SK-N-SH (cell line): ENCODE measurements at regions of chr17 and their contacts with region 1.

Region 1: GRCh38 chr17:8785547-8786413 is 13.4 kb downstream of the MFSD6L start:
- DNase-seq: peak; percentile 80
- H3K4me3 ChIP-seq: peak overlapping the region in 1 of 2 experiments; percentile 16; a peak in 1 of 4 replicates
- H3K27ac ChIP-seq: no peak overlapping the region
- H3K4me1 ChIP-seq: peaks cover 0 to 2% of the 10 kb centered on the region in 2 experiments; a peak in 1 of 4 replicates
- H3K27me3 ChIP-seq: peaks cover 17% of the 10 kb centered on the region; the same call in 1 of the 2 replicates
- CTCF ChIP-seq: peak; percentile 84
- EP300 ChIP-seq: no peak
- RAD21 ChIP-seq: peak; percentile 90

Region 2: DNA sequence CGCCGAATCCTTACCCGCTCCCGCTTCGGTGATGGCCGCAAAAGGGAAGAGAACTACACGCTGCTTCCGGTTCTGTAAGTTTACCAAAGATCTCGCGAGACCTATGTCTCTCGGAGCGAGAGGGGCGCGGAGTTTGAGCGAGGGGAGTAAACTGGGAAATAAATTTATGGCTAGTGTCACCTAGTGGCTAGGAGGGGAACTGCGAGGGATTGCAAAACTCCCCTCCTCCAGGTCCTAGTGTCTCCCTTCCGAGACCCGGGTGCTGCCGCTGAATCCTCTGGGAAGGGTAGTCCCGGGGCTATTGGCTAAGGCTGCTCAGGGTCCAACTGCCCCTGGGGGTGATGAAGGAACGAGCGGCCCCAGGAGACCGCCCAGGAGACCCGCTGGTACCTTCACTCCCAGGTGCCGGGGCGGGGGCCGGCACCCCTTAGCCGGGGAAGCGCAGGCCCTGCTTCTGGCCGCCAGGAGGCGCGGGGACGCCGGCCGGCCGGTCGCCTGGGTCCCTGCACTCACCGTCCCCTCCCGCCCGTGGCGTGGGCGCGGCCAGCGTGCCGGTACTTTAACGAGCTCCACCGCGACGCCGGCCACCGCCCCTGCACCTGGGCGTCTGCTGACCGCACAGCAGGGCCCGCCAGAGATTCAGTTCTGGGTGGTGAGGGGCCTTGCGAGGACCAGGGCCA is 402.5 kb before region 1 on chr17 and contains the start of gene RPL26:
- CTCF ChIA-PET with region 1: interaction called, 17 read pairs
- POLR2A ChIA-PET with region 1: interaction called, 6 read pairs
- DNase-seq: peak; percentile 94
- H3K4me3 ChIP-seq: peak within 1 kb of the TSS; percentile 73 to 87
- H3K27ac ChIP-seq: peak within 1 kb of the TSS; percentile 77 to 90
- H3K4me1 ChIP-seq: peaks cover 21 to 28% of the 10 kb centered on the region in 2 experiments; a peak in 3 of 4 replicates
- H3K27me3 ChIP-seq: no peaks in the 10 kb centered on the region
- CTCF ChIP-seq: peak; percentile 98
- EP300 ChIP-seq: peak in 1 of 2 experiments; percentile 8; a peak in 1 of 4 replicates
- RAD21 ChIP-seq: peak; percentile 40; the same call in 1 of the 2 replicates
- polyA plus RNA-seq, gene RPL26: 4,770 and 5,684 TPM in 2 replicates

Region 3: GRCh38 chr17:8393420-8394241 is 392.1 kb before region 1 on chr17:
- CTCF ChIA-PET with region 1: interaction called, 10 read pairs
- POLR2A ChIA-PET with region 1: no interaction called
- DNase-seq: no peak
- H3K4me3 ChIP-seq: no peak overlapping the region
- H3K27ac ChIP-seq: no peak overlapping the region
- H3K4me1 ChIP-seq: no peaks in the 10 kb centered on the region; a peak in 1 of 4 replicates
- H3K27me3 ChIP-seq: peaks cover 22% of the 10 kb centered on the region; the same call in 1 of the 2 replicates
- CTCF ChIP-seq: no peak
- EP300 ChIP-seq: no peak
- RAD21 ChIP-seq: no peak

Region 4: DNA sequence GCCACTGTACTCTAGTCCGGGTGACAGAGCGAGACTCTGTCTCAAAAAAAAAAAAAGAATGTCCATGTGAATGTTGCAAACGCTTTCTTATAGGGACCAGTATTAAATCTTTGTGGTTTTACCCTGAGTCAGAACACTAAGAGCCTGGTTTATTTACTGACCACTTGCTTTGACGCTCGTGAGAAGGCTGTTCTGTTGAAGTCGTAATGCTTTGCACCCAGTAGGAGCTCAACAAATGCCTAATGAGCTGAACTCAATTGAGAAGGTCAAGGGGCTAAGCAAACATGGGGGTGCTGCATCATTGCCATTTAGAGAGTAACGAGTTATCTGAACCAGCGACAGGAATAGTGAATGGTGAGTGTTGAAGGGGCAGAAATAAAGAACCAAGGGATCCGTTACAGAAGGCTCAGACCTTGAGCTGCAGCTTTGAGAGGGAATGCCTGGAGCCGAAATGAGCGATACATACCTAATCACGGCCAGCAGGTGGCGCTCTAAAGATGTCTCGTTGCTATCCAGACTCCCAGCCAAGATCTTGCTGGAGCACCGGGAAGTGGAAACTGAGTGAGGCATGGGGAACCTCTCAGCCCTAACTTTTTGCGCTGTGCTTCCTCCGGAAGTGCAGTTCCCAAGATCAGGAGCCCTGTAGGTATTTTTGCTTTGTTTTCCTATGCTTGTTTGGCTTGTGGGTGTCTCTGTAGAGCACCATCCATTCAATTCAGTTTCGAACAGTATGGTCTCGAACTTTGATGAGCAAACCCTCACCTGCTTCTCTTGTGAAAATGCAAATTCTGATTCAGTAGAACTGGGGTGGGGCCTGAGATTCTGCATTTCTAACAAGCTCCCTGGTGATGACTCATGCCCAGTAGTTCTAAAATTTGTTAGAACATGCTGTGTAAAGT is 375.6 kb before region 1 on chr17:
- CTCF ChIA-PET with region 1: interaction called, 42 read pairs
- POLR2A ChIA-PET with region 1: no interaction called
- DNase-seq: peak; percentile 80
- H3K4me3 ChIP-seq: peak overlapping the region in 1 of 2 experiments; percentile 48; a peak in 1 of 4 replicates
- H3K27ac ChIP-seq: no peak overlapping the region
- H3K4me1 ChIP-seq: no peaks in the 10 kb centered on the region
- H3K27me3 ChIP-seq: peaks cover 17% of the 10 kb centered on the region; the same call in 1 of the 2 replicates
- CTCF ChIP-seq: peak; percentile 84
- EP300 ChIP-seq: no peak
- RAD21 ChIP-seq: peak; percentile 85

Region 5: GRCh38 chr17:8420041-8420934 is 365.5 kb before region 1 on chr17:
- CTCF ChIA-PET with region 1: interaction called, 11 read pairs
- POLR2A ChIA-PET with region 1: no interaction called
- DNase-seq: peak; percentile 72
- H3K4me3 ChIP-seq: no peak overlapping the region
- H3K27ac ChIP-seq: peak overlapping the region in 1 of 2 experiments; percentile 18; a peak in 1 of 4 replicates
- H3K4me1 ChIP-seq: peaks cover 0 to 3% of the 10 kb centered on the region in 2 experiments; a peak in 1 of 4 replicates
- H3K27me3 ChIP-seq: peaks cover 14% of the 10 kb centered on the region; the same call in 1 of the 2 replicates
- CTCF ChIP-seq: no peak
- EP300 ChIP-seq: peak in 1 of 2 experiments; percentile 22; a peak in 1 of 4 replicates
- RAD21 ChIP-seq: no peak

Region 6: GRCh38 chr17:8542599-8543502 is 242.9 kb before region 1 on chr17:
- CTCF ChIA-PET with region 1: no interaction called
- POLR2A ChIA-PET with region 1: no interaction called
- DNase-seq: no peak
- H3K4me3 ChIP-seq: no peak overlapping the region
- H3K27ac ChIP-seq: no peak overlapping the region
- H3K4me1 ChIP-seq: no peaks in the 10 kb centered on the region
- H3K27me3 ChIP-seq: no peaks in the 10 kb centered on the region
- CTCF ChIP-seq: no peak
- EP300 ChIP-seq: no peak
- RAD21 ChIP-seq: no peak

Region 7: GRCh38 chr17:8757189-8757588 is 28.6 kb before region 1 on chr17:
- CTCF ChIA-PET with region 1: interaction called, 14 read pairs
- POLR2A ChIA-PET with region 1: no interaction called
- DNase-seq: no peak
- H3K4me3 ChIP-seq: no peak overlapping the region
- H3K27ac ChIP-seq: no peak overlapping the region
- H3K4me1 ChIP-seq: no peaks in the 10 kb centered on the region
- H3K27me3 ChIP-seq: peaks cover 59% of the 10 kb centered on the region
- CTCF ChIP-seq: no peak
- EP300 ChIP-seq: no peak
- RAD21 ChIP-seq: no peak

Region 8: GRCh38 chr17:8798846-8799569 is 13.2 kb after region 1 on chr17 and contains the start of gene MFSD6L:
- CTCF ChIA-PET with region 1: interaction called, 15 read pairs
- POLR2A ChIA-PET with region 1: no interaction called
- DNase-seq: no peak
- H3K4me3 ChIP-seq: no peak within 1 kb of the TSS
- H3K27ac ChIP-seq: no peak within 1 kb of the TSS
- H3K4me1 ChIP-seq: no peaks in the 10 kb centered on the region
- H3K27me3 ChIP-seq: peaks cover 54% of the 10 kb centered on the region
- CTCF ChIP-seq: no peak
- EP300 ChIP-seq: no peak
- RAD21 ChIP-seq: no peak
- polyA plus RNA-seq, gene MFSD6L: not detected in 2 replicates